ENCODE measurements at regions of chr17 and their contacts with region 1.

Region 1: DNA sequence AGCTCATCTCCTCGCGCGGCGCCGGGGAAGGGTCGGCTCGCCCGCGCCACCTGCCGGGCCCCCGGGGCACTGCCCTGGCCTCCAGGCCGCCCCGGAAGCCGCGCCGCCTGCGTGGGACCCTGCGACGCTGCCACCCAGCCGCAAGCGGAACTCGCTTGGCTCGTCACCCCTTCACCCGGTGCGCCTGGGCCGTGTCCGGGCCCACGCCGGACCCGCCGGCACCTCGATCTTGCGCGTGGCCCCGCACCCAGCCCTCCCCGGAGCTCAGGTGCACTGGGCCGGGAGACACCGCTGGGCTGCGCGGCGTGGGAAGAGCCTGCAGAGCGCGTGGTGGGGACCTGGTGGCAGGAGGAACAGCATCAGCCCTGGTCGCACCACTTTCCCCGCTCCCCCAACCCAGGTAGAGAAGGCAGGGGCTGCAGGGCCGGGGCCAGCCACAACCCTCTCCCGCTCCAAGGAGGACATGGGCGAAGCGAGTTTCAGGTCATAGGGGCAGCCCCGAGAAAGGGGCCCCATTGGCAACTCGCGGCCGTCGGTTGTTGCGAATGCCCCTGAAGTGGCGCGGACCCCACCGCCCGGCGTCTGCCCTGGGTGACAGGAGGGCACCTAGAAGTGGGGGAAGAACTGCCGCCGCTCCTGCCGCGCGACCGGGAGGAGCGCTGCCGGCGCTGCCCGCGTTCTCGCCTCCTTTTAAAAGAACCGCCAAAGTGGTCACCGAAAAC is 363 bp upstream of the MIF4GD start:
- DNase-seq: peak; percentile 90
- ATAC-seq: peak; percentile 87
- H3K4me3 Mint-ChIP-seq: peak overlapping the region; percentile 86
- H3K27ac Mint-ChIP-seq: peak overlapping the region; percentile 86
- H3K4me1 Mint-ChIP-seq: peaks cover 37% of the 10 kb centered on the region
- H3K27me3 Mint-ChIP-seq: no peaks in the 10 kb centered on the region

Region 2: GRCh38 chr17:75238684-75239191 is 32.7 kb before region 1 on chr17:
- CTCF ChIA-PET with region 1: interaction called, 13 read pairs
- DNase-seq: peak; percentile 72
- ATAC-seq: peak; percentile 74
- H3K4me3 Mint-ChIP-seq: no peak overlapping the region
- H3K27ac Mint-ChIP-seq: peak overlapping the region; percentile 70
- H3K4me1 Mint-ChIP-seq: peaks cover 32% of the 10 kb centered on the region
- H3K27me3 Mint-ChIP-seq: no peaks in the 10 kb centered on the region

Region 3: DNA sequence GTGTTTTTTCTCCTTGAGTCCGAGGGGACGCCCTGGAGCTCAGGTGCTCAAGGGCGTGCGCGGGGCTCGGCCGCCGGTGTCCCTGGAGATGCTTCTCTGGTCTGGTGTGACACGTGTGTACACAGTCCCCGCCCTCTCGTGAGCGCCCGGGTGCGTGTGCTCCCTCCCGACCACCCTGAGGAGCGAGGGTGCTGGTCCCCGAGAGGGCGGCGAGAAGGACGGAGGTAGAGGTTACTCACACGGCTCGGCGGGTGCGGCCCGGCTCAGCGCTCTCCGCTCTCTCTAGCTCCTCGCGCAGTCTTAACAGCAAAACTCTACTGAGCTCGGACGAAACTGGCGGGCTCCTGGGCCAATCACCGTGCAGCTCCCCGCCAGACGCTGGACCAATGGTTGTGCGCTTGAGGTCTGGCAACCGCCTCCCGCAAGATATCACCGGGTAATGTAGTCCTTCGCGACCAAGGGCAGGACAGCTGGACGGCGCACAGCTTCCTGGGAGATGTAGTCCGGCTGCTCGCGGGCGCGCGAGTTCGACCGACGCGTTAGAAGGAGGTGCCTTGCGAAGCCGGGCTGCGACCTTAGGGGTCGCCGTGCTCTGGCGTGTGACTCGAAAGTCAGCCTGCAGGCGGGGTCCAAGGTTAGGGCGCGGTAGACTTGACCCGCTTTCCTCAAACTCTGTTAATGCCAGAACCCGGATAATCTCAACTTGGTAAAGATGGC is 17.9 kb after region 1 on chr17 and contains the start of gene SLC25A19:
- CTCF ChIA-PET with region 1: interaction called, 86 read pairs
- DNase-seq: peak; percentile 100
- ATAC-seq: peak; percentile 92
- H3K4me3 Mint-ChIP-seq: peak within 1 kb of the TSS; percentile 97
- H3K27ac Mint-ChIP-seq: peak within 1 kb of the TSS; percentile 100
- H3K4me1 Mint-ChIP-seq: peaks cover 24% of the 10 kb centered on the region
- H3K27me3 Mint-ChIP-seq: no peaks in the 10 kb centered on the region
- total RNA-seq, gene SLC25A19: 46.3 to 66.4 TPM

Region 4: DNA sequence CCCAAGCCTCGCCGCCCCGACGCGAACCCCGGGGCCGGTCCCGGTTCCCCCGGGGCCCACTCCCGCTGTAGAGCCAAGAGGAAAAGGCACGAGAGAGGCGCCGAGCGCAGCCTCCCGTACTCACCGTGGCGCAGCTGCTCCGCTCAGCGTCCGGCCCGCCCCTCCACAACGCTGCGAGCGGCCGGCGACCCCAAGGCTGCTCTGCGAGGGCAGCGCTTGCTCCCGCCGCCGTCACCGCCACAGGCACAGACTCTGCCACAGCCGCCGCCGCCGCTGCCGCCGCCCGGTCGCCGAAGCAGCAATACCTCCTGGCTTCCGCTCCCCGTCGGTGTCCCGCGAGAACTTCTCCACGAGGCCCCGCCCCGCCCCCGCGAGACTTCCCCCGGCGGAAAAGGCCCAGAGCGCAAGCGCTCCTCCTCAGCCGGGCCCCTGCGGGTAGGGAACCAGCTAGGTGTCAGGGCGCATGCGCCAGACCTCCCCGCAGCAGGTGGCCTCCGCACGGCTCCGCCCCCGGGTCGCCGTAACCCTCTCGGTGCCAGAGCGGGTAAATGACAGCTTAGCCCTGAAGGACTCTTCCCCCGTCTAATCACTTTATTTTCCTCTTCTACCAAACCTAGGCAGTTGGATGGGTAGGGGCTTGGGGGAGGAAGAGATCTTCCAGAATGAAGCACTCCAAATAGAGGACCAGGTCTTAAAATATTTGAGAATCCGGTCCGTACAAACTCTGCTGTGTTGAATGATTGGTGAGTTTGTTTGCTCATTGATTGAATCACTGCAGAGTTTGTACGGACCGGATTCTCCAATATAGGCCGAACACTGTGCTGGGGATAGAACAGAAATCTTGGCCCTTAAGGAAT is 134.2 kb after region 1 on chr17 and contains the start of gene GRB2:
- CTCF ChIA-PET with region 1: interaction called, 20 read pairs
- DNase-seq: peak; percentile 100
- ATAC-seq: peak; percentile 89
- H3K4me3 Mint-ChIP-seq: peak within 1 kb of the TSS; percentile 90
- H3K27ac Mint-ChIP-seq: peak within 1 kb of the TSS; percentile 91
- H3K4me1 Mint-ChIP-seq: peaks cover 45% of the 10 kb centered on the region
- H3K27me3 Mint-ChIP-seq: no peaks in the 10 kb centered on the region
- total RNA-seq, gene GRB2: 138 to 179 TPM

Region 5: GRCh38 chr17:75433218-75433783 is 161.9 kb after region 1 on chr17:
- CTCF ChIA-PET with region 1: no interaction called
- DNase-seq: no peak
- ATAC-seq: no peak
- H3K4me3 Mint-ChIP-seq: no peak overlapping the region
- H3K27ac Mint-ChIP-seq: no peak overlapping the region
- H3K4me1 Mint-ChIP-seq: peaks cover 20% of the 10 kb centered on the region
- H3K27me3 Mint-ChIP-seq: peaks cover 29% of the 10 kb centered on the region

Region 6: GRCh38 chr17:75456417-75457046 is 185.1 kb after region 1 on chr17 and contains the start of gene TMEM94:
- CTCF ChIA-PET with region 1: interaction called, 12 read pairs
- DNase-seq: peak; percentile 96
- ATAC-seq: peak; percentile 99
- H3K4me3 Mint-ChIP-seq: peak within 1 kb of the TSS; percentile 86
- H3K27ac Mint-ChIP-seq: peak within 1 kb of the TSS; percentile 83
- H3K4me1 Mint-ChIP-seq: peaks cover 43% of the 10 kb centered on the region
- H3K27me3 Mint-ChIP-seq: no peaks in the 10 kb centered on the region
- total RNA-seq, gene TMEM94: 83.7 to 106 TPM